ENCODE measurements at regions of chr11 and their contacts with region 1.

Region 1: GRCh38 chr11:20127671-20128527 is 32.4 kb downstream of the DBX1 start:
- DNase-seq: no peak
- H3K4me3 ChIP-seq: no peak overlapping the region
- CTCF ChIP-seq: peak; percentile 86

Region 2: DNA sequence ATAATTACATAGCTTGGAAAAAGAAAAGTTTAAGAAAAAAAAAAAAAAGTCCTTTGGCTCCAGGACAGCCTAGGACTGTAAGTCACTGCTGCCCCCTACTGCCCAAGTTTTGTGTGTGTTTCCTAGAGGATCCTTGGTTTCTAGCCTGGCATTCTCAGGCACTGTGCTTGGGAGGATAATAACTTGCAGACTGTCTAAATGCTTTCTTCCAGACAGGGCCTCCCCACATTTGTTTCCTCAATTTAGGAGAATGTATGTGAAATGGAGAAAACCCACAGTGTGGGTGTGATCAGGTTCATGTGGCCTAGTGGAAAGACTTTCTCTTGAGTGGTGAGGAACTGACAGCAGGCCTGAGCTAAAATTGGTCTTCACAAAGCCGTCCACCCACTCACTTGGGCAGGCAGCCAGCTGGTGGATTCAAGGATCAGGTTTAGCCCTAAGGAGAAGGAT is 224.3 kb before region 1 on chr11:
- CTCF ChIA-PET with region 1: interaction called, 138 read pairs
- POLR2A ChIA-PET with region 1: no interaction called
- DNase-seq: no peak
- H3K4me3 ChIP-seq: no peak overlapping the region
- CTCF ChIP-seq: peak; percentile 79

Region 3: DNA sequence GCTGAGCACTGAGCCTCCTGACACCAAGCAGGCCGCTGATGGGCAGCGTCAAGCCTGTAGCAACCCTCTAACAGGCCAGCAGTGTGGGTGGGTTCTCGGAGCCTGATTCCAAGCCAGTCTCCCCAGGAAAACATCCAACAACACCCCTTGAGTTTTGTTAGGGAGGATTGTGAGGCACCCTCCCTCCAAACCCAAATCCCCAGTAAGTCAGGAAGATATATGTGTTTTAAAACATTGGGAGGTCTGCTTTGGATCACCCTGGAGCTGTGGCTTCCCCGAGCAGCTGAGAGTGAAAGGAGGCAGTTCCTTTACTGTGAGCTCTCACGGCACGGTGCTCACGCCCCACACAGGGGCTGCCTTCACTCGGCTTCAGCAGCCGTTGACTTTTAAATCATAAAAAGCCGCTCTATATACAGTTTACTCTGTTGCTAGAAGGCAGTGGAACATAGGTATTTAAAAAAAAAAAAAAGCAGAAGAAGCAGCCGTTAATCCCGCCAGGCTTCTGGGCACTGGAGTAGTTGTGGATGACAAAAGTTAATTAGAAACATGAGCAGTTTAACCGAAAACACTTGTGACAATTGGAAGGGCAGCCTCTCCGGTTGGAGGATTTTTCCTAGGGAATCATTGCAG is 196.6 kb before region 1 on chr11:
- CTCF ChIA-PET with region 1: interaction called, 52 read pairs
- POLR2A ChIA-PET with region 1: interaction called, 3 read pairs
- DNase-seq: no peak
- H3K4me3 ChIP-seq: peak overlapping the region; percentile 54
- CTCF ChIP-seq: no peak

Region 4: DNA sequence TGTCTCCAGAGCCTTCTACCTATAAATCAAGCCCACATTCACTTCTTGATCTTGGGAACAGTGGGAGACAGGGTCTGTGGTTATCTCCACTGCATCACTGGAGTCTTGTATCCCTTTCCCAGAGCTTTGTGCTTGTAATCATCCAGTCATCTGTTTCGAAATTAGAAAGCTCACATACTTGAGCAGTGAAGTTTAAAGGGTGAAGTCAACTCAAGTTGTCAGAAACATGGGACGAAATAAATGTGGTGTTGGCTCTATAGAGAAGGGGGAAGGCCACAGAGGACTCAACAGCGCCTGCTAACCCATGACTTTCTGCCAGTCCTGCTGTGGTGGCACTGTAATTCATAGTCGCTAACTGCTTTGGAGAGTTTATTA is 165.1 kb before region 1 on chr11:
- CTCF ChIA-PET with region 1: interaction called, 41 read pairs
- POLR2A ChIA-PET with region 1: interaction called, 3 read pairs
- DNase-seq: peak; percentile 96
- H3K4me3 ChIP-seq: no peak overlapping the region
- CTCF ChIP-seq: no peak

Region 5: DNA sequence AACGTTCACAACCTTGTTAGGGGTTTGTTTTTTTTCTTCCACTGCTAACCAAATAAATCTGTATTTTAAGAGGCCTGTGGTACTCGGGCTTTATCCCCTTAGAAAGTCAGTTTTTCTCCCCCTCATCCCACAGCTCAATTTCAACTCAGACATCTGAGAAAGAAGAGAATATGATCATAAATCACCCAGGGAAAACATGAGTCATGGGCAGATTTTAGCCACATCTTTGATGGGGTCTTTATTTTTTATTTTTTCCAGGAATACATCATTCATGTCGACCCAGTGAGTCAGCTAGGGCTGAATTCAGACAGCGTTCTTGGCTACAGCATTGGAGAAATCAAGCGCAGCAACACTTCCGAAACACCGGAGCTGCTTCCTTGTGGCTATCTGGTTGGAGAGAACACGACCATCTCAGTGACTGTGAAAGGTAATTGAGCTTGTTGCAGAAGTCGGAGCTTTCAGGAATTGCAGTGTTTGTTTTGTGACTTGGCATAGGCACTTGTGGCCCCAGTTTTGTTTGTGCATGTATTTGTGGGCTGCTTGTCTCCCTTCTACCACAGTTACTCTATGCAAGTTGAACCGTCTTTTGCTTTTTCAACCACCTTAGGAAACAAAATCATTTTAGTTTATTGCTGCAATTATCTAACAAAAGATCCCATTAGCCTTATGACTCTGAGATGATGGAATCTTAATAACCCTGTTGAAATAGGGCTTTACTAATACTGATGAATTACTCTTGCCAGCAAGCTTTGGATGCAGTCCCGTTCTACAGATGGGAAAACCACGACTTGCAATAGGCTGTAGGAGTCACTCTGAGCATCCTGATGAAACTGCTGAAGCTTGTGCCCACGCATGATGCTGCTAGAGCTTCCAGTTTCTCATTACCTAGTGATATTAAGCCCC is 30.3 kb before region 1 on chr11:
- CTCF ChIA-PET with region 1: interaction called, 21 read pairs
- POLR2A ChIA-PET with region 1: interaction called, 4 read pairs
- DNase-seq: peak; percentile 88
- H3K4me3 ChIP-seq: no peak overlapping the region
- CTCF ChIP-seq: no peak

Region 6: DNA sequence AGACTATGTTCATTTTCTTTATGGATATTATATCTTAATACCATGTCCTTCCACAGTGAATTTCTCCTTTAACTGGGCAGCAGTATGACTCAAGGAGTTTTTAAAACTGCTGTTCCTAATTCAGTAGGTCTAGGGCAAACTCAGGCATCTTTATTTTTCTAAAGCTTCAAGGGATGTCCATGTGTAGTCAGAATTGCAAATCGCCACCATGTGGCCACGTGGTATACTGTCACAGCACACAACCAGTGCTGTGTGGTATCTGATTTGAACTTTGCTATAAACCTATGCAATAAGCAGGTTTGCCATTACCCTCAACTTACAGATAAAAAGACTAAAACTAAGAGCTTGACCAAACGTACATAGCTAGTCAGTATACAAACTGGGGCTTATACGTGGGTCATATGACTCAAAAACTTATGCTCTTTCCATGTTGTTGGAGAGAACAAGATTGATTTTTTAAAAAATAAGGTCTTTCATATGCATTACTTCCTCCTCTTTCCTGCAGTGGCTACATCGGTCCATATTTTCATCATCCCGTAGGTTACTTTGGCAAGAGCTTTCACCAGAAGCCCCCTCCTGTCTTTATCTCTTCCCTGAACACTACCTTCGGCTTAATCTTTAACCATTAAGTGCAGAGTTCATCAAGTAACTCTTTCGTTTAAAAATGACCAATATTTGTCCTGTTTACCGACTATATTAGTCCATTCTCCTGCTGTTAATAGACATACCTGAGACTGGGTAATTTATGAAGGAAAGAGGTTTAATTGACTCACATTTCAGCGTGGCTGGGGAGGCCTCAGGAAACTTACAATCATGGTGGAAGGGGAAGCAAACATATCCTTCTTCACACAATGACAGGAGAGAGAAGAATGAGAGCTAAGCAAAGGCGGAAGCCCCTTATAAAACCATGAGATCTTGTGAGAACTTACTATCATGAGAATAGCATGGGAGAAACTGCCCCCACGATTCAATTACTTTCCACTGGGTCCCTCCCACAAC is 227.6 kb after region 1 on chr11:
- CTCF ChIA-PET with region 1: interaction called, 160 read pairs
- POLR2A ChIA-PET with region 1: no interaction called
- DNase-seq: no peak
- H3K4me3 ChIP-seq: no peak overlapping the region
- CTCF ChIP-seq: peak; percentile 58

Region 7: GRCh38 chr11:20618083-20618482 is 490.2 kb after region 1 on chr11:
- CTCF ChIA-PET with region 1: no interaction called
- POLR2A ChIA-PET with region 1: no interaction called
- DNase-seq: no peak
- H3K4me3 ChIP-seq: no peak overlapping the region
- CTCF ChIP-seq: no peak

Measured in AG04449 (cell line).